ENCODE measurements at regions of chr22 and their contacts with region 1.

Region 1: GRCh38 chr22:35582861-35583670 is 34.1 kb downstream of the MB start:
- DNase-seq: peak in 1 of 2 donors; percentile 54
- ATAC-seq: peak in 6 of 8 donors; percentile 21 to 58 (median 29)
- H3K4me3 ChIP-seq: no peak overlapping the region
- H3K27ac ChIP-seq: peak overlapping the region in 4 of 10 donors; percentile 11 to 45 (median 40)
- H3K4me1 ChIP-seq: peaks cover 0 to 36% (median 14%) of the 10 kb centered on the region in 9 donors
- H3K27me3 ChIP-seq: no peaks in the 10 kb centered on the region
- CTCF ChIP-seq: peak; percentile 89 to 98 (median 92)

Region 2: GRCh38 chr22:35350539-35351503 is 232.2 kb before region 1 on chr22:
- intact Hi-C with region 1: loop called (anchors 1 to 5 kb)
- DNase-seq: peak; percentile 92 to 93
- ATAC-seq: peak; percentile 85 to 92 (median 90)
- H3K4me3 ChIP-seq: peak overlapping the region in 9 of 10 donors; percentile 39 to 65 (median 61)
- H3K27ac ChIP-seq: peak overlapping the region in 8 of 10 donors; percentile 53 to 90 (median 73)
- H3K4me1 ChIP-seq: peaks cover 0 to 48% (median 13%) of the 10 kb centered on the region in 9 donors
- H3K27me3 ChIP-seq: no peaks in the 10 kb centered on the region
- CTCF ChIP-seq: peak; percentile 75 to 97 (median 94)

Region 3: GRCh38 chr22:35430897-35431322 is 152.2 kb before region 1 on chr22:
- intact Hi-C with region 1: loop called (anchors 1 to 5 kb)
- DNase-seq: peak; percentile 90 to 91
- ATAC-seq: peak; percentile 94 to 99 (median 98)
- H3K4me3 ChIP-seq: no peak overlapping the region
- H3K27ac ChIP-seq: peak overlapping the region in 5 of 10 donors; percentile 14 to 69 (median 48)
- H3K4me1 ChIP-seq: peaks cover 0 to 14% (median 8%) of the 10 kb centered on the region in 9 donors
- H3K27me3 ChIP-seq: no peaks in the 10 kb centered on the region
- CTCF ChIP-seq: peak; percentile 94 to 99 (median 97)

Region 4: GRCh38 chr22:35467681-35468434 is 115.2 kb before region 1 on chr22:
- intact Hi-C with region 1: loop called in 1 of 10 experiments (anchors 10 kb)
- DNase-seq: peak; percentile 75 to 82
- ATAC-seq: peak; percentile 89 to 98 (median 96)
- H3K4me3 ChIP-seq: no peak overlapping the region
- H3K27ac ChIP-seq: peak overlapping the region; percentile 58 to 86 (median 75)
- H3K4me1 ChIP-seq: peaks cover 6 to 22% (median 17%) of the 10 kb centered on the region in 9 donors
- H3K27me3 ChIP-seq: no peaks in the 10 kb centered on the region
- CTCF ChIP-seq: no peak

Region 5: DNA sequence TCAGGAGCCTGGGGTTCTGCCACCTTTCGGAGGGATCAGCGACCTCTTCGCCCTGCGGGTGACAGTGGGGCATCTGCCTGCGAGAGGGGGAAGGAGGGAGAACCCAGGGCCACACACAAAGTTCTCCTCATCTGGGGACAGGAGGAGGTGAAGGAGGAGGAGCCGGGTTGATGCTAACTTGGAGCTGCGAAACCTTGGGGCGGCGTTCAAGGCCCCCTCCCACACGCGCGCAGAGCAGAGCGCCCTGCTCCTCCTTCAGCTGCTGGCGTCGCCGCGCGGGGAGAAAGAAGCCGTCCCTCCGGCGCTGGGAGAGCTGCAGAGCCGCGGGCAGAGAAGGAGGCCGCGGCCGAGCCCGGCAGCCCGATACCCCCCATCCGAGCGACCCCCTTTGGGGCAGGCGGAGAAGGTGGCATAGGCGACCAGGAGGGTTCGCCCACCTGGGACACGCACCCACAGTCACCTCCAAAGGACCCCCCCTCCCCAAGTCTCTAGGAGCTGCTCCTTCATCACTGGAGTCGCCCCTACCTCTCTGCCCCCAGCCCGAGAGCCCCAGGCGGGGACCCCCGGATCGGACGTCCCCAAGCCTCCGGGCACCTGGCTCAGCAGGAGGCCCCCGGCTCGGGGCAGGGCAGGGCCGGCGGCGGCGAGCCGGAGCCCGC is 42.3 kb before region 1 on chr22 and contains the start of gene RASD2:
- intact Hi-C with region 1: no loop called
- DNase-seq: peak; percentile 43 to 61
- ATAC-seq: peak; percentile 4 to 60 (median 34)
- H3K4me3 ChIP-seq: peak within 1 kb of the TSS; percentile 46 to 66 (median 59)
- H3K27ac ChIP-seq: peak within 1 kb of the TSS; percentile 29 to 85 (median 68)
- H3K4me1 ChIP-seq: peaks cover 5 to 39% (median 23%) of the 10 kb centered on the region in 9 donors
- H3K27me3 ChIP-seq: peaks cover 0 to 57% (median 23%) of the 10 kb centered on the region in 7 donors
- CTCF ChIP-seq: no peak
- total RNA-seq, gene RASD2: 1.4 to 9.9 (median 3.6) TPM